Prostate gland (tissue), 2 donors: ENCODE measurements at regions of chr9 and their contacts with region 1.

Region 1: GRCh38 chr9:26892251-26893029 is at the start of gene CAAP1:
- DNase-seq: peak; percentile 91
- H3K4me3 ChIP-seq: peak within 1 kb of the TSS; percentile 84 to 100
- H3K27ac ChIP-seq: peak within 1 kb of the TSS; percentile 93 to 97
- H3K4me1 ChIP-seq: peaks cover 3% of the 10 kb centered on the region
- H3K27me3 ChIP-seq: no peaks in the 10 kb centered on the region
- CTCF ChIP-seq: peak in 2 of 4 experiments; percentile 13 to 38
- POLR2A ChIP-seq: peak; percentile 53
- total RNA-seq, gene CAAP1: 20.4 to 20.8 TPM

Region 2: DNA sequence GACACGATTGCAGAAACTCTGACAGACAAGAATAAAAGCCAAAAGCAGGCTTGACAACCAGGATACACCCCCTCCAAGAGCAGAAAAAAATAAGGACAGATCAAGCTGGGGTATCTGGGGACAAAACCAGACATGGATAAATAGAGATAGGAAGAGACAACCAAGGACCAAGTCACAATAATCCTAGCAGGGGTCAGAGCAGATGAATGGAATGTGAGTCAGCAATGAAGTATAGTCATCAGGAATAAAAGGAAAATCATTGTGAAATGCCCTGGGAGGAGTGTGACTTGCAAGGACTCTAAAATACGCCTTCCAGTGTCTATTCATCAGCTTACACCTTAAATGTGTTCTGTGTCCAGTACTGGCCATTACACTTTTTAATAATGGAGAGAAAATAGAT is 206.6 kb before region 1 on chr9:
- intact Hi-C with region 1: no loop called
- DNase-seq: no peak
- H3K4me3 ChIP-seq: no peak overlapping the region
- H3K27ac ChIP-seq: no peak overlapping the region
- H3K4me1 ChIP-seq: no peaks in the 10 kb centered on the region
- H3K27me3 ChIP-seq: no peaks in the 10 kb centered on the region
- CTCF ChIP-seq: no peak
- POLR2A ChIP-seq: no peak

Region 3: GRCh38 chr9:26946753-26947727 is 54.6 kb after region 1 on chr9 and contains the start of gene PLAA:
- intact Hi-C with region 1: loop called (anchors 2 kb)
- DNase-seq: peak; percentile 89
- H3K4me3 ChIP-seq: peak within 1 kb of the TSS; percentile 81 to 98
- H3K27ac ChIP-seq: peak within 1 kb of the TSS; percentile 93 to 95
- H3K4me1 ChIP-seq: peaks cover 8% of the 10 kb centered on the region
- H3K27me3 ChIP-seq: no peaks in the 10 kb centered on the region
- CTCF ChIP-seq: peak in 2 of 4 experiments; percentile 26 to 49
- POLR2A ChIP-seq: peak; percentile 27
- total RNA-seq, gene PLAA: 24.3 to 36.5 TPM

Region 4: DNA sequence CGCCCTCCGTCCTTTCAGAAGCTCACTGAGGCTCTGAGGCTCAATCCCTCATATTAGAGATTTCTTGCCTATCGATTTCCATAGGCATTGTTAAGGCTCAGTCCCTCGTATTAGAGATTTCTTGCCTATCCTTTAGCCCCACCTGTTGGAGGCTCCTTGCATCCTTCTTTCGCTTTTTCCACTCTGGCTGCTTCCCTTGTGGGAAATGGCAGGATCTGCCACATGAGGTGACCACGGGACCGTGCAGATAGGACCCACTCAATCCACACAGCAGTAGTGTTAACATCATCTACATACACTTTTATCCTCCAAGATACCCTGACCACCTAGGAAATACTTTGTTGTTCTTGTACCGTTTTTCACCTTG is 83.2 kb after region 1 on chr9:
- intact Hi-C with region 1: no loop called
- DNase-seq: no peak
- H3K4me3 ChIP-seq: no peak overlapping the region
- H3K27ac ChIP-seq: no peak overlapping the region
- H3K4me1 ChIP-seq: no peaks in the 10 kb centered on the region
- H3K27me3 ChIP-seq: no peaks in the 10 kb centered on the region
- CTCF ChIP-seq: peak in 2 of 4 experiments; percentile 26 to 36
- POLR2A ChIP-seq: no peak

Region 5: GRCh38 chr9:27276193-27277030 is 384.0 kb after region 1 on chr9:
- intact Hi-C with region 1: loop called (anchors 5 kb)
- DNase-seq: peak; percentile 26
- H3K4me3 ChIP-seq: no peak overlapping the region
- H3K27ac ChIP-seq: no peak overlapping the region
- H3K4me1 ChIP-seq: no peaks in the 10 kb centered on the region
- H3K27me3 ChIP-seq: no peaks in the 10 kb centered on the region
- CTCF ChIP-seq: peak; percentile 69 to 88 (median 74)
- POLR2A ChIP-seq: no peak

Region 6: DNA sequence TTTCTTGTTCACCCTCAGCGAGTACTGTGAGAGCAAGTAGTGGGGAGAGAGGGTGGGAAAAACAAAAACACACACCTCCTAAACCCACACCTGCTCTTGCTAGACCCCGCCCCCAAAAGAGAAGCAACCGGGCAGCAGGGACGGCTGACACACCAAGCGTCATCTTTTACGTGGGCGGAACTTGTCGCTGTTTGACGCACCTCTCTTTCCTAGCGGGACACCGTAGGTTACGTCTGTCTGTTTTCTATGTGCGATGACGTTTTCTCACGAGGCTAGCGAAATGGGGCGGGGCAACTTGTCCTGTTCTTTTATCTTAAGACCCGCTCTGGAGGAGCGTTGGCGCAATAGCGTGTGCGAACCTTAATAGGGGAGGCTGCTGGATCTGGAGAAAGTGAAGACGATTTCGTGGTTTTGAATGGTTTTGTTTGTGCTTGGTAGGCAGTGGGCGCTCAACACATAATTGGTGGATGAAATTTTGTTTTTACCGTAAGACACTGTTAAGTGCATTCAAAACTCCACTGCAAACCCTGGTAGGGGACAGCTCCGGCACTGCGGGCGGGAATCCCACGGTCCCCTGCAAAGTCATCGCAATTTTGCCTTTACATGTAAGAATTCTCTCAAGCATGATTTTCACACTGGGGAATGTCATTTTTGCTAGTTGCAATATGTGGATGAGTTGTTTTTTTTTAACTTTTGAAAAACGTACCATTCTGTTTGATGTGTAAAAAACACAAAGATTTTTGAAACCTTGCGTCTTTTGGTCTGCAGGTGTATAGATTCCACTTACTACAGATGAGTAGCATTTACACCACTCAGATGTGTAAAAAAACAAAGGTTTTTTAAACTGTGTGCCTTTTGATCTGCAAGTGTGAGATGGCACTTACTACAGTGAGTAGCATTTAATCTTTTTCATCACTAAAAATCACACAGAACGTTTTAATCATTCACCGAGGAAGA is 681.5 kb after region 1 on chr9:
- intact Hi-C with region 1: loop called (anchors 5 kb)
- DNase-seq: peak; percentile 99
- H3K4me3 ChIP-seq: peak overlapping the region; percentile 69 to 75
- H3K27ac ChIP-seq: peak overlapping the region; percentile 99
- H3K4me1 ChIP-seq: no peaks in the 10 kb centered on the region
- H3K27me3 ChIP-seq: no peaks in the 10 kb centered on the region
- CTCF ChIP-seq: peak in 1 of 4 experiments; percentile 16
- POLR2A ChIP-seq: peak; percentile 86